ENCODE measurements at regions of chr6 and their contacts with region 1.

Region 1: DNA sequence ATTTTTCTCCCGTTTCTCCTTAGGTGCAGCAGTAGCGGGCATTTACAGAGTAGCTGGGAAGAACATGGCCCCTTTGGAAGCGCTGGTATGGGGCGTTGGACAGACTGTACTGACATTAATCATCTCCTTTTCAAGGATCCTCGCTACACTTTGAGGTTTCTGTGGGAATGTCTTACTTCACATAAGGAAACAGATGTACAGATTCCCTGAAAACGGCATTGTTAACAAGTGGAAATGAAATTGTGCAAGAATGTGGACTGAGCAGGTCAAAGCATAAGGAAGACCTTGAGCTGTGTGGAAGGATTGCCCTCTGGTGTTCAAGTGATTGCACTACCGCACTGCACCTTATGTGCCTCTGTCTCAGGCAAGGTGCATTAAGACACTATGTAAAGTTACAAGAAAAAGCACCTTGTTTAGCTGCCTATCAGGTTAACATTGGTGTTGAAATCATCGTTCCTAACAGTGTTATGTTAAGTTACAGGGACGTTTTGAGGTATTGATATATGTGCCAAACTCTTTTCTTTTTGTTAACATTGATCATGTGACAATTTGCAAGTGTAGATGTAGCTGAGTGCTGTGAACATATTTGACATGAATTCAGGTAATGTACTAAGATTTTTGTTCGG is 38.0 kb downstream of the TMEM170B start:
- DNase-seq: peak; percentile 51 to 84
- ATAC-seq: peak; percentile 99 to 100
- H3K4me3 ChIP-seq: no peak overlapping the region
- H3K27ac ChIP-seq: peak overlapping the region in 1 of 2 experiments; percentile 71; a peak in 3 of 6 replicates
- H3K4me1 ChIP-seq: 0 out of 3 replicates have a peak, but pooled peaks cover 2% of the 10 kb centered on the region
- CTCF ChIP-seq: peak; percentile 79
- EP300 ChIP-seq: no peak
- POLR2A ChIP-seq: no peak
- RAD21 ChIP-seq: peak; percentile 91 to 93

Region 2: DNA sequence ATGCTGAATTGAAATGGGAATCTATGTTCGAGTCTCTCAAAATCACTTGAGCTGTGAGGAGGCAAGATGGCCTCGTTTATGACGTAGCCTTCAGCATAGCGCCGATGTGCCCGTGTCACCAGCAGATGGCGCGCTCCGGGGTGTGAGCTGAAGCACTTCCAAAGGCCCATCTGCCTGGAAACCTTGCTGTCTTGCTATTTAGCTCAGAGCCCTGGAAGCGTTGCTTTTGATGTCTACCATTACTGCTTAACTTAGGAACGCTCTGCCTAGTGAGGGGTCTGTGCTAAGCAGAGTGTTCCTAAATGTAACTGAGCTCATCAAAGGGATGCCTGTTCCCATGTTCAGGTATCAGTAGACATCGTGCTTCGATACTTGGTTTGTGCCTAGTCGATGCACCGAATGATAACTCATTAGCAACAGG is 620.9 kb before region 1 on chr6:
- CTCF ChIA-PET with region 1: interaction called, 11 read pairs
- POLR2A ChIA-PET with region 1: no interaction called
- DNase-seq: peak; percentile 30 to 76
- ATAC-seq: peak; percentile 82 to 93; a peak in 5 of 6 replicates
- H3K4me3 ChIP-seq: no peak overlapping the region
- H3K27ac ChIP-seq: no peak overlapping the region
- H3K4me1 ChIP-seq: peaks cover 6% of the 10 kb centered on the region
- CTCF ChIP-seq: peak; percentile 53
- EP300 ChIP-seq: no peak
- POLR2A ChIP-seq: no peak
- RAD21 ChIP-seq: peak; percentile 47 to 62

Region 3: DNA sequence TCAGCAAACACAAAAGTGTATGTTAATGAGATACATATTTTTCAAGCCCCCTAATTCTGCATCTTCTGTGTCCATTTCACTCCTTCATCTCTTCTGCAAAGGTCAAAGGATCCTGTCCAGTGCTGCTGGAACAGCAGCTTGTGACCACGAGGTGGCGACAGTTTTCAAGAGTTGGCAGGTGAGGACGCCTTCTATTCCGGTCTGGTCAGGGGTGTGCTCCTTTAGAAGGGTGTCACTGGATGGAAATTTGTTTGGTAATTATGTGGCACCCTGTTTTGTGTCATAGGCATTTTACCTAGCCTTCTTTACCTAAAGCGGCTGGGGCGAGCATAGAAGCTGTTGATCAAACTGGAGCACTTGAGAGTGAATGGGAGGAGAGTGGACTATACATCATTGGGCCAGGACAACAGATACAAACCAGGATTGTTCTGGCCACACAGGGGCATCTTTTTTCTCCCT is 431.1 kb before region 1 on chr6:
- CTCF ChIA-PET with region 1: interaction called, 11 read pairs
- POLR2A ChIA-PET with region 1: no interaction called
- DNase-seq: peak; percentile 73 to 88
- ATAC-seq: peak; percentile 89 to 93
- H3K4me3 ChIP-seq: no peak overlapping the region
- H3K27ac ChIP-seq: peak overlapping the region; percentile 89 to 94
- H3K4me1 ChIP-seq: peaks cover 29% of the 10 kb centered on the region
- CTCF ChIP-seq: peak; percentile 83
- EP300 ChIP-seq: no peak
- POLR2A ChIP-seq: no peak
- RAD21 ChIP-seq: peak; percentile 93 to 94

Region 4: DNA sequence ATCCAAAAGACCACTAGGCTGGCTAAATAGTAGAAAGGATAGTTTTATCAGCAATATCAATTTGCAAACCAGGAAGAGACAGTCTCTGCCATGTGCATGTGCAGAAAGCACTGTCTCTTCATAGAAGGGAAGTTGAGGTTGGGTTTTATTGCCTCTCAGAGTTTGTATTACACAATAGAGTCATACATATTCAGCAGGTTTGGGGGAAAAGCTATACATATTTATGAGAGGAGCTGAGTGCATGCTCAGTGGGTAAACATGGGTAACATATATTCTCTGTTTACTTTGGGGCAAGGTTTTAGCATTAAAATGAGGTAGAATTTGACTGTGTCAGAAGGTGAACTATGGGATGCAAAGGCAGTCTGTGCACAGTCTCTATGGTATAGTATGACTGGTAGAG is 23.1 kb before region 1 on chr6:
- CTCF ChIA-PET with region 1: interaction called, 10 read pairs
- POLR2A ChIA-PET with region 1: no interaction called
- DNase-seq: no peak
- ATAC-seq: no peak
- H3K4me3 ChIP-seq: no peak overlapping the region
- H3K27ac ChIP-seq: no peak overlapping the region
- H3K4me1 ChIP-seq: no peaks in the 10 kb centered on the region
- CTCF ChIP-seq: no peak
- EP300 ChIP-seq: no peak
- POLR2A ChIP-seq: no peak
- RAD21 ChIP-seq: no peak

Region 5: DNA sequence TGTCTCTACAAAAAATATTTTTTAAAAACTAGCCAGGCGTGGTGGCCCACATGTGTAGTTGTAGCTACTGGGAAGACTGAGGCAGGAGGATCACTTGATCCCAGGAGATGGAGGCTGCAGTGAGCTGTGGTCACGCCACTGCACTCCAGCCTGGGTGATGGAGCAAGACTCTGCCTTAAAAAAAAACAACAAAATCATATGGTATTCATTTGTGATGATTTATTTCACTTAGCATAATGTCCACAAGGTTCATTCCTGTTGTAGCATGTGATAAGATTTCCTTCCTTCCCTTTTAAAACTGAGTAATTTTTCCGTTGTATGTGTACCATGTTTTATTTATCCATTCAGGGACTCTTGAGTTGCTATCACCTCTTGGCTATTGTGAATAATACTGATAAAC is 11.7 kb before region 1 on chr6:
- CTCF ChIA-PET with region 1: interaction called, 29 read pairs
- POLR2A ChIA-PET with region 1: no interaction called
- DNase-seq: no peak
- ATAC-seq: no peak
- H3K4me3 ChIP-seq: no peak overlapping the region
- H3K27ac ChIP-seq: no peak overlapping the region
- H3K4me1 ChIP-seq: no peaks in the 10 kb centered on the region
- CTCF ChIP-seq: no peak
- EP300 ChIP-seq: no peak
- POLR2A ChIP-seq: no peak
- RAD21 ChIP-seq: no peak

Region 6: DNA sequence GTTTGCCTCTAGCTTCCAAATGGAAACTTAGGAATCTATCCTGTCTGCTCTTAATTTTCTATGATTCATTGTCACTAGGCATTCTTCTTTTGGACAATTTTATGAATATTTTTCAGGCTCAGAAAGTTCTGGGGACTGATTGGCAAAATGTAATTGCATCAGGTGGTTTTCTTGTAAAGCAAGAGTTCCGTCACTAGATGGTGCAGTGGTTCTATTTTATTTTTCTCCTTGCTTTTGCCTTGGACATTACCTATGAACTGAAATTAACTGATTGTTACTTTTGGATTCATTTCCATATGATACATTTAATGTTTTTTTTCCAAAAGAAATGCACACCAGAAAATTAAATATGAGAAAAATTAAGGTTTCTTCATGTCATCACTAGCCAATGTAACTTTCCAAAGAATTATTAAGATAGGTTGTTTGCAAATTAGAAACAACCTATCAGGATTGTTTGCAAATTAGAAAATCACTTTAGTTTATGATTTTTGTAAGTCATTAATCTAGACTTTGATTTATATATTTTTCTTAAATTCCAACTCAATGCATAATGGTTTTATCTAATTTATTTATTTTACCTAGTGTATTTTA is 10.0 kb after region 1 on chr6:
- CTCF ChIA-PET with region 1: interaction called, 11 read pairs
- POLR2A ChIA-PET with region 1: no interaction called
- DNase-seq: peak; percentile 28 to 58
- ATAC-seq: peak in 1 of 2 experiments; percentile 56; a peak in 2 of 6 replicates
- H3K4me3 ChIP-seq: no peak overlapping the region
- H3K27ac ChIP-seq: peak overlapping the region; percentile 60 to 77; a peak in 5 of 6 replicates
- H3K4me1 ChIP-seq: peaks cover 33% of the 10 kb centered on the region
- CTCF ChIP-seq: peak; percentile 72
- EP300 ChIP-seq: no peak
- POLR2A ChIP-seq: no peak
- RAD21 ChIP-seq: peak; percentile 80 to 87

Region 7: DNA sequence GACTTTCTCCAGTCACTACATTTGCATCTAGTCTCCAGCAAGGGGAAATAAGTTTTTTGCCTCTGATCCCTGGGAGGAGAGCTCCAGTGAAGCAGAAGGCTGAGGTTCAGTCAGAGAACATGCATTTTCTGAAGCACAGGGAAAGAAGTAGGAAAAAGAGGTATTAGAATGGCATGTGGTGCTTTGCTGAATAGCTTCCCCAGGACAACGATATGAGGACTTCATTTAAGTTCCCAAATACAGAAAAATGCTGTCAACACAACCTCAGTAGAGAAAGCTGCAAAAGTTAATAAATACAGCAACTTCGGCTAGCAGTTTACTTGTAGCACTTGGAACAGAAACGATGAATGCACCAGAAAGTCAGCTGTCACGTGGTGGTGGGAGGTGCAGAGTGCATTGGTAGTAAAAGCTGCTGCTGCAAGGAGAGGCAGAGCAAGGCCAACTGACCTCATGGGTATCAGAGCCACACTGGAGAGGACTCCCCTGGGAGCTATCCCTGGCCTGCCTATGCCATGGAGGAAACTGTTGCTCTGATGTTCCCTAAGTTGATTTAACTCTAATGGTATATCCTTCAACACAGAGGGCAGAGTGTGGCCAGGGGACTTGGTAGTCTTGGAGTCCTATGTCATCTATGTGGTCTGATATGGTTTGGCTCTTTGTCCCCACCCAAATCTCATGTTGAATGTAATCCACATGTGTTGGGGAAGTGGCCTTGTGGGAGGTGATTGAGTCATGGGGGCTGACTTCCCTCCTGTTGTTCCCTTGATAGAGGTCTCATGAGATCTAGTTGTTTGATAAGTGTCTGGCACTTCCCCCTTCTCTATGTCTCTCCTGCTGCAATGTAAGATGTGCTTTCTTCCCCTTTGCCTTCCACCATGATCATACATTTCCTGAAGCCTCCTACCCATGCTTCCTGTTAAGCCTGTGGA is 117.2 kb after region 1 on chr6:
- CTCF ChIA-PET with region 1: no interaction called
- POLR2A ChIA-PET with region 1: no interaction called
- DNase-seq: no peak
- ATAC-seq: no peak
- H3K4me3 ChIP-seq: no peak overlapping the region
- H3K27ac ChIP-seq: no peak overlapping the region
- H3K4me1 ChIP-seq: no peaks in the 10 kb centered on the region
- CTCF ChIP-seq: no peak
- EP300 ChIP-seq: no peak
- POLR2A ChIP-seq: no peak
- RAD21 ChIP-seq: no peak

Measured in A549 (cell line).